MCF 10A (cell line): ENCODE measurements at regions of chr3 and their contacts with region 1.

Region 1: DNA sequence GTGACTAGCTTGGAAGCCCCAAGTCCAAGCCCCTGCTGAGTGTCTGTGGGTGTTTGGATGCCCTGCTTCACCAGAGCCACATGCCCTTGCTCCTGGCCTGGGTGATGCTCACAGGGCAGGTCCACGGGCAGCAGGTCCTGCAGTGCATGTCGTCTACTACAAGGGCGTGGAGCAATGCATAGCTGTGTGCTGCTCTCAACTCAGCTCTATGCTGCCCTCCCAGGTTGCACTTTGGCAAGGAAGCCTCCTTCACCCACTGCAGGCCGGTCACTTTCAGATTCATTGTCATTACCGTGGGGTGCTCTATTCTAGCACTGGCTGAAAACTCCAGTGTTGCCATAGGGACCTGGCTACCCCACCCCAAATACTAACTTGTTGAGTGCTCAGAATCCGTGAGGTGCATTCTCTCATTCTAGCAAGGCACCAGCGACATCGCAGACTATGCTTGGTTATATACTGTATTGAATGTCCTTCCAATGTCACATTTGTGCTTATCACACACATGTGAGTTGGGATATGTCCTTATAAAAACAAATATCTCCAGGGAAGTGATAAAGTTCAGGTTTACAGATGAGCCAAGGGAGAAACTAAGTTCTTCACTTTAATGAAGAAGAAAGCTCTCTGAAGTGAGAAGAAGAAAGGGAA is 51.8 kb downstream of the GRAMD1C start:
- DNase-seq: peak; percentile 11
- H3K4me3 Mint-ChIP-seq: no peak overlapping the region
- H3K27ac Mint-ChIP-seq: no peak overlapping the region
- H3K4me1 Mint-ChIP-seq: no peaks in the 10 kb centered on the region
- H3K27me3 Mint-ChIP-seq: no peaks in the 10 kb centered on the region
- CTCF ChIP-seq: no peak

Region 2: GRCh38 chr3:113927556-113927955 is 37.2 kb after region 1 on chr3:
- CTCF ChIA-PET with region 1: no interaction called
- POLR2A ChIA-PET with region 1: no interaction called
- intact Hi-C with region 1: loop called (anchors 1 kb)
- DNase-seq: no peak
- H3K4me3 Mint-ChIP-seq: no peak overlapping the region
- H3K27ac Mint-ChIP-seq: no peak overlapping the region
- H3K4me1 Mint-ChIP-seq: no peaks in the 10 kb centered on the region
- H3K27me3 Mint-ChIP-seq: no peaks in the 10 kb centered on the region
- CTCF ChIP-seq: no peak